Head of caudate nucleus (tissue), 42 donors: ENCODE measurements at regions of chr14 and their contacts with region 1.

Region 1: DNA sequence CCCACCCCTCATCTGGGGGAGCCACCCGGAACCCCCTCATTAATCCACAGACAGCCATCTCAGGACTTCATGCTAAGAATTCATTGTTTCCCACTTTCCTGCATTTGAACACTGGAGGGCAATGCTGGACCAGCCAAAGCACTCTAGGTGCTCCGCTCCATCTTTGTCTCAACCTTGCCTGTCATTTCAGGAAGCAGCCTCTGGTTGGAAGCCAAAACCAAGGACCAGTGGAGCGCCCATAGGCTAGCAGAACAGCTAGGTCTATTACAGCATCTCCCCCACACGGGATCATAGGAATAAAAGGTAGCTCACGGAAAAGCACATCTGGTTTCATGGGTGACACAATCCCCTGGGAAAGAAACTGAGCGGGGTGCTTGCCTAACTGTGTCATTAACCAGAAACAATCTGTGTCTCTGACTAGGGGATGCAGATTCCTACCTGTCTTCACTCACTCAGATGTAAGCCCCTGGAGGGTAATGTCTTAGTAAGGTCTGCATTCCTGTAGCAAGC is 197.1 kb downstream of the DAD1 start:
- DNase-seq: peak in 41 of 42 donors; percentile 44 to 88 (median 70)

Region 2: DNA sequence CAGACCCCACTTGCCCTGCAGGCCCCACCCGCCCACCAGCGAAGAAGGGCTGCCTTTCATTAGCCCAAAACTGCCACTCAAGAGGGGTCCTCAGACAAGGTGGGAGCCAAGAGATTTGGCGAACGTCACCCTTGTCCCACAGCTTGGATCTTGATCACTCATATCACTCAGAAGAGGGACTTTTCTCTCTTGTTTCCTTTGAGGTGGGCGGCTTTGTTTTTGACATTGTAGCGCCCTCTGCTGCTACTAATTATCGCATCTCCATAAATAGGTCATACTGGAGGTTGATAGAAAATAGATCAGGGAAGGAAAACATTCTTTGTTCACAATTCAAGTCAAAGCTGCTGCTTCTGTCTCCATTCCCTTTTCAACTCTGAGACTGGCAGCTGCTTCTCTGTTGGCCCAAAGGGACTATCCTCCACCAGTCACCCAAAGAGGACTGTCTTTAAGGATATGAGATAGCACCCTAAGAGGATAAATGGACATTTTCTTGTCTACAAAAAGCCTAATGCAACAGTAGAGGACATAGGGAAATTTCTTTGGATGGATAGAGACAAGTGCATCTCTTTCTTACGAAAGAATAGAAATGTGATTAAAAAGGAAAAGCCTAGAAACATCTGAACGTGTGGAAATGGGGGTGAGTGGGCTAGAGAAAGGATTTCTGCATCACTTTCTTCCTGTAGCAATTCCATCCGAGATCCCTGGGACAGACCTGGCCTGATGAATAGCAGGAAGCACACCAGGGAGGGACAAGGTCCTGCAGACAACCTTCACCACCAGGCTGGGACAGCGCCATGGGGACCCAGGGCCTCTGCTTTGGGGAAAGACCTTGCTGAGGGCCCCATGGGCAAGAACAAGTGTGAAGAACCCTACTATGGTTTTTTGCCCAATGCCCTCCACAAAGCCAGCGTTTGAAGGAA is 81.2 kb after region 1 on chr14:
- intact Hi-C with region 1: loop called (anchors 2 kb)
- DNase-seq: peak in 36 of 42 donors; percentile 19 to 89 (median 65)

Region 3: DNA sequence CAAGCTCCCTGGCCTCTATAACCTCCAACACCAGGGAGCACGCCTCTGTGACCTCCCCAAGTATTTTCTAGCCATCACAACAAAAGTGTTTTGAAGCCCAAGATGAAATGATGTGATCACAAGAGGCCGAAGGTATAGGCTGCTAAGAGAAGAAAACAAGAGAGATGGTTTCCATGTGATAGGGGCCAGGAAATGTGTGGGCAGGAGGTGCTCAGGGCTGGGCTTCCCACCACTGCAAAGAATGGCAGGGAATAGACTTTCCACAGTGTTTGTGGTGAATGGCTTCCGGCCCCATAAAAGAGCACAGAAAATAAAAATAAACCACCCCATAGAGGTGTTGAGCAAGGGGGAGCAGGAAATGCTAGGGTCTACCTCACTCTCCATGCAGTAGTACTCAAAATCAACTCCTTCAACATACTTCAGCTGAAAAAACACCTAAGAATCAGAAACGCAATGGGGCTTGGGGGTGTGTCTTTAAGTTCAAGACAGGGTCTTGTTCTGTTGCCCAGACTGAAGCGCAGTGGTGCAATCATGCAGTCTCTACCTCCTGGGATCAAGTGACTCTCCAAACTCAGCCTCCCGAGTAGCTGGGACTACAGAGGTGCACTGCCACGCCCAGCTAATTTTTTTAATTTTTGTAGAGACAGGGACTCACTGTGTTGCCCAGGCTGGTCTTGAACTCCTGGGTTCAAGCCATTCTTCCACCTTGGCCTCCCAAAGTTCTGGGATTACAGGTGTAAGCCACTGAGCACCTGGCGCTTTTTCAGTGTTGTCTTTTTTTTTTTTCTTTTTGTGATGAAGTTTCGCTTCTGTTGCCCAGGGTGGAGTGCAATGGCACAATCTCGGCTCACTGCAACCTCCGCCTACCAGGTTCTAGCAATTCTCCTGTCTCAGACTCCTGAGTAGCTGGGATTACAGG is 170.0 kb after region 1 on chr14:
- intact Hi-C with region 1: loop called (anchors 10 kb)
- DNase-seq: no peak